ENCODE measurements at regions of chr2 and their contacts with region 1.

Region 1: GRCh38 chr2:86562922-86563649 is at the start of gene CHMP3:
- DNase-seq: peak; percentile 98
- H3K4me3 ChIP-seq: peak within 1 kb of the TSS; percentile 88
- H3K27ac ChIP-seq: peak within 1 kb of the TSS; percentile 88
- H3K4me1 ChIP-seq: peaks cover 14% of the 10 kb centered on the region
- CTCF ChIP-seq: no peak
- total RNA-seq, gene CHMP3: 8.5 and 12.8 TPM in 2 replicates

Region 2: GRCh38 chr2:86603905-86604304 is 40.8 kb after region 1 on chr2:
- CTCF ChIA-PET with region 1: interaction called, 26 read pairs
- POLR2A ChIA-PET with region 1: no interaction called
- intact Hi-C with region 1: no loop called
- DNase-seq: no peak
- H3K4me3 ChIP-seq: no peak overlapping the region
- H3K27ac ChIP-seq: no peak overlapping the region
- H3K4me1 ChIP-seq: no peaks in the 10 kb centered on the region
- CTCF ChIP-seq: no peak

Region 3: GRCh38 chr2:86623651-86624541 is 60.8 kb after region 1 on chr2 and contains the start of gene RNF103:
- CTCF ChIA-PET with region 1: no interaction called
- POLR2A ChIA-PET with region 1: interaction called, 5 read pairs
- intact Hi-C with region 1: loop called (anchors 1 kb)
- DNase-seq: peak; percentile 93
- H3K4me3 ChIP-seq: peak within 1 kb of the TSS; percentile 94
- H3K27ac ChIP-seq: peak within 1 kb of the TSS; percentile 78
- H3K4me1 ChIP-seq: peaks cover 20% of the 10 kb centered on the region
- CTCF ChIP-seq: no peak
- total RNA-seq, gene RNF103: 11.8 and 12.9 TPM in 2 replicates